Mammary epithelial cell (primary cell): ENCODE measurements at regions of chr2 and their contacts with region 1.

Region 1: GRCh38 chr2:46471-47345 is at the start of gene FAM110C:
- DNase-seq: peak; percentile 82
- H3K4me3 ChIP-seq: peak within 1 kb of the TSS; percentile 84 to 94 (median 87)
- H3K27ac ChIP-seq: peak within 1 kb of the TSS; percentile 91
- H3K4me1 ChIP-seq: peaks cover 39% of the 10 kb centered on the region
- H3K27me3 ChIP-seq: no peaks in the 10 kb centered on the region
- CTCF ChIP-seq: no peak
- total RNA-seq, gene FAM110C: 37.3 to 46.9 TPM

Region 2: GRCh38 chr2:69366-70344 is 22.9 kb after region 1 on chr2:
- CTCF ChIA-PET with region 1: no interaction called
- dilution Hi-C with region 1: no loop called
- in situ Hi-C with region 1: no loop called
- intact Hi-C with region 1: loop called (anchors 2 kb)
- DNase-seq: peak; percentile 60
- H3K4me3 ChIP-seq: no peak overlapping the region
- H3K27ac ChIP-seq: peak overlapping the region; percentile 87
- H3K4me1 ChIP-seq: peaks cover 45% of the 10 kb centered on the region
- H3K27me3 ChIP-seq: peaks cover 2% of the 10 kb centered on the region
- CTCF ChIP-seq: no peak

Region 3: DNA sequence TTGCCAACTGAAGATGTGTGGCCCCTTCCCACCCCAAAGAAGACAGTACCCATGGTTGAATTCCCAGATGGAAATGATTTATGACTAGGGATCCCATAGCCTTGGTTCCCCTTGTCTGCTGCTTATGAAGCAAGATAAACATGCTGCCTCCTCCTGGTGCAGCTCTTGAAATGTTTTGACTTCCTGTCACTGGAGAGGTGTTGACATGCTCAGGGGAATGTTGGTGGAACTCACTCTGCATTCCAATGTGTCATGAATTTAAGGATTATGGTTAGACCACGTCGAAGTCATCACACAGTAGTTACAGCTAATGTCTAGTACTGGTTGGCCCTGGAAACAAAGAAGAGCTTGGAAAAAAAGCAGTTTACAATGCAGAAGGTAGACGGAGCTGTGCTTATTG is 68.6 kb after region 1 on chr2:
- CTCF ChIA-PET with region 1: no interaction called
- dilution Hi-C with region 1: no loop called
- in situ Hi-C with region 1: no loop called
- intact Hi-C with region 1: loop called (anchors 1 kb)
- DNase-seq: peak; percentile 72
- H3K4me3 ChIP-seq: no peak overlapping the region
- H3K27ac ChIP-seq: no peak overlapping the region
- H3K4me1 ChIP-seq: peaks cover 10% of the 10 kb centered on the region
- H3K27me3 ChIP-seq: no peaks in the 10 kb centered on the region
- CTCF ChIP-seq: peak; percentile 13 to 49

Region 4: DNA sequence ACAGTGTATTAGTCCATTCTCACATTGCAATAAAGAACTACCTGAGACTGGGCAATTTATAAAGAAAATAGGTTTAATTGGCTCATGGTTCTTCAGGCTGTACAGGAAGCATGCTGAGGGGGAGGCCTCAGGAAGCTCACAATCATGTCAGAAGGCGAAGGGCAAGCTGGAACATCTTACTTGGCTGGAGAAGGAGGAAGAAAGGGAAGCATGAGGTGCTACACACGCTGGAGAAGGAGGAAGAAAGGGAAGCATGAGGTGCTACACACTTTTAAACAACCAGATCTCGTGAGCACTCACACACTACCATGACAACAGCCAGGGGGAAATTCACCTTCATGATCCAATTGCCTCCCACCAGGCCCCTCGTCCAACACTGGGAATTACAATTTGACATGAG is 94.9 kb after region 1 on chr2:
- CTCF ChIA-PET with region 1: interaction called, 6 read pairs
- dilution Hi-C with region 1: no loop called
- in situ Hi-C with region 1: no loop called
- intact Hi-C with region 1: loop called (anchors 1 kb)
- DNase-seq: peak; percentile 17
- H3K4me3 ChIP-seq: no peak overlapping the region
- H3K27ac ChIP-seq: no peak overlapping the region
- H3K4me1 ChIP-seq: peaks cover 5% of the 10 kb centered on the region
- H3K27me3 ChIP-seq: no peaks in the 10 kb centered on the region
- CTCF ChIP-seq: no peak

Region 5: DNA sequence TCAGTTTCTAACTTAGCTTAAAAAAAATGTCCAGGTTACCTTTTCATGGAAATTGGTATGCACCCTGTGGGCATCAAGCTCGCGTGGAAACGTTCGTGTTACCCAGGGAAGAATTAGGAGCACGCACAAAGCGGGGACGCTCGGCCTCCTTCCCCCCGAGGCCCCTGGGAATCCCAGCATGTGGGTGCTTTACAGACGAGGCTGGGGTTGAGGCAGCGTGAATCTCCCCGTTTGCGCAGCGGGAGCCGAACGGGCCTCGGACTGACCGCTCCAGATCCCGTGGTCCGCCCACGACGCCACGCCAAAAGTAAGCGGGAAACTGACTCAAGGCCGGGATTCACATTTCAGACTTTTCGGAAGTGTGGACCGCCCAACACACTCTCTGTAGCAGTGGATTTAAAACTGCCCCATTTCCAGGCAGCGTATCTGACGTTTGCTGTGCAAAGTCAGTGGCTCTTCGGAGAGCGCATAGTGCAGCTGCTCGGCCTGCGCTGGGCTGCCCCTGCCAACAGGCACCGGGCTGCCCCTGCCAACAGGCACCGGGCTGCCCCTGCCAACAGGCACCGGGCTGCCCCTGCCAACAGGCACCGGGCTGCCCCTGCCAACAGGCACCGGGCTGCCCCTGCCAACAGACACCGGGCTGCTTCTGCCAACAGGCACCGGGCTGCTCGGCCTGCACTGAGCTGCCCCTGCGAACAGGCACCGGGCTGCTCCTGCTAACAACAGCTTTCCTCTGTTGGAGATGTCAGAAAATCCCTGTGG is 167.4 kb after region 1 on chr2:
- CTCF ChIA-PET with region 1: no interaction called
- dilution Hi-C with region 1: no loop called
- in situ Hi-C with region 1: no loop called
- intact Hi-C with region 1: no loop called
- DNase-seq: no peak
- H3K4me3 ChIP-seq: no peak overlapping the region
- H3K27ac ChIP-seq: no peak overlapping the region
- H3K4me1 ChIP-seq: peaks cover 3% of the 10 kb centered on the region
- H3K27me3 ChIP-seq: no peaks in the 10 kb centered on the region
- CTCF ChIP-seq: no peak